Activated CD4-positive, alpha-beta T cell treated with anti-CD3 and anti-CD28 coated beads for 36 hours (primary cell): ENCODE measurements at regions of chr11 and their contacts with region 1.

Region 1: GRCh38 chr11:103108933-103109817 is at the start of gene DYNC2H1:
- DNase-seq: peak; percentile 93
- ATAC-seq: peak; percentile 96
- H3K4me3 Mint-ChIP-seq: peak within 1 kb of the TSS; percentile 84
- H3K27ac Mint-ChIP-seq: peak within 1 kb of the TSS; percentile 68
- H3K4me1 Mint-ChIP-seq: peaks cover 11% of the 10 kb centered on the region
- H3K27me3 Mint-ChIP-seq: peaks cover 5% of the 10 kb centered on the region
- total RNA-seq, gene DYNC2H1: 1.4 to 1.9 TPM

Region 2: DNA sequence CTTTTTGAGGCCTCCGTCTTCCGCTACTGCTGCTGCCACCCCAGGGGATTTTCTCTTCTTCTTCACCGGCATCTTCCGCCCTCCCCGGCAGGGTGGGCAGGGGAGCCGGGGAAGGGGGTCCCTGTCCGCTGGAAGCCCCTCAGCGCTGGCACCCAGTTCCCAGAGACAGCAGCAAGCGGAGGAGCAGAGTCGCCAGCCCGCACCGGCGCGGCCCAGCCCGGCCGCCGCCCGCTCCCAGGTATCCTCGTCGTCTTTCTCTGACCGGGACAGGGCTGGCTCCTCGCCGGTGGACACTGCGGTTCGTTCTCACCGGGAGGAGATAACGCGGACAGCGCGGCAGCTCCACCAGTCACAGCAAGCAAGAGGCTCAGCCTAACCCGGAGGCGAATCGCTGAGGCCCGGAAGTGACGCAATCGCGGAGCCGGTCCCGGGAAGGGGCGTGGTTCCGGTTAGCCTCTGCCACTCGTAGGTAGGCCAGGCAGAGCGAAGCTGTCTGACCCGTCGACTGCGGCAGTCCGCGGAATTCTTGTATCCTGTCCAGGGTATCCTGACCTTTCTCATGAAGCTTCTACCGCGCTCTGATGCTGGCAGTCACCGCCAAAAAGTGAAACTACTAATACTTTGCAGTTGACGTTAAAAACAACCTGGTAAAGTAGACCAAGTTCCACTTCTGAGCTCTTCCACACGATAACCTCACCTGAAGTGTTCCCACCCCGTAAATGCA is 17.2 kb before region 1 on chr11 and contains the start of gene DCUN1D5:
- CTCF ChIA-PET with region 1: interaction called, 40 read pairs
- POLR2A ChIA-PET with region 1: interaction called, 14 read pairs
- intact Hi-C with region 1: loop called (anchors 1 kb)
- DNase-seq: peak; percentile 97
- ATAC-seq: peak; percentile 94
- H3K4me3 Mint-ChIP-seq: peak within 1 kb of the TSS; percentile 86
- H3K27ac Mint-ChIP-seq: peak within 1 kb of the TSS; percentile 86
- H3K4me1 Mint-ChIP-seq: peaks cover 25% of the 10 kb centered on the region
- H3K27me3 Mint-ChIP-seq: peaks cover 9% of the 10 kb centered on the region
- total RNA-seq, gene DCUN1D5: 59.2 to 78.1 TPM